PC-3 (cell line): ENCODE measurements at regions of chr11 and their contacts with region 1.

Region 1: DNA sequence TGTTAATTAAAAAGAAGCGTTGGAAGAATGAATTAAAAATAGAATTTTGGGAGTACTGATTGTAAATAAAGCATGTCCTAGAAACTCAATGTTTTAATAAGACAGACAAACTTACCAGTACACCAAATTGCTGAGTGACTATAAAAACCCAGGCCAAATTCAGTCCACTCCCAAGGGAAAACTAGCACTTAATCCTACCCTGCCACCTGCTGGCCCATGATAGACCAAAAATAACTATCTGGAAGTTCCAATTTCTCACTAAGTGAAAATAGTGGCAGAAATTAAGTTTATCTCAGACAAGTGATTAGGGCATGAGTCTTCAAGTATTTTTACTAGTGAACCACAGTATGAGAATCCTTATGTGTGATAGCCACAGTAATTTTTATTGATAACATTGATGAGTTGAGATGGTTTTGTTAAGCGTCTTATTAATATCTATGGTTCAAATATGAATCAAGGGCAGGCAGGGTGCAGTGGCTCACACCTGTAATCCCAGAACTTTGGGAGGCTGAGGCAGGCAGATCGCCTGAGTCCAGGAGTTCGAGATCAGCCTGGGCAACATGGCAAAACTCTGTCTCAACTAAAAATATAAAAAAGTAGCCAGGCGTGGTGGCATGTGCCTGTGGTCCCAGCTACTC is 9.8 kb upstream of the DDX10 start:
- DNase-seq: peak; percentile 86
- ATAC-seq: peak; percentile 90
- H3K4me3 ChIP-seq: no peak overlapping the region
- H3K27ac ChIP-seq: no peak overlapping the region
- H3K4me1 ChIP-seq: no peaks in the 10 kb centered on the region
- H3K27me3 ChIP-seq: no peaks in the 10 kb centered on the region
- CTCF ChIP-seq: peak; percentile 97

Region 2: GRCh38 chr11:108121274-108122155 is 533.6 kb before region 1 on chr11 and contains the start of gene ACAT1:
- CTCF ChIA-PET with region 1: no interaction called
- POLR2A ChIA-PET with region 1: no interaction called
- intact Hi-C with region 1: loop called (anchors 1 kb)
- DNase-seq: peak; percentile 98
- ATAC-seq: peak; percentile 96
- H3K4me3 ChIP-seq: peak within 1 kb of the TSS; percentile 74
- H3K27ac ChIP-seq: peak within 1 kb of the TSS; percentile 21
- H3K4me1 ChIP-seq: peaks cover 24% of the 10 kb centered on the region
- H3K27me3 ChIP-seq: no peaks in the 10 kb centered on the region
- CTCF ChIP-seq: no peak
- total RNA-seq, gene ACAT1: 180 and 212 TPM in 2 replicates

Region 3: DNA sequence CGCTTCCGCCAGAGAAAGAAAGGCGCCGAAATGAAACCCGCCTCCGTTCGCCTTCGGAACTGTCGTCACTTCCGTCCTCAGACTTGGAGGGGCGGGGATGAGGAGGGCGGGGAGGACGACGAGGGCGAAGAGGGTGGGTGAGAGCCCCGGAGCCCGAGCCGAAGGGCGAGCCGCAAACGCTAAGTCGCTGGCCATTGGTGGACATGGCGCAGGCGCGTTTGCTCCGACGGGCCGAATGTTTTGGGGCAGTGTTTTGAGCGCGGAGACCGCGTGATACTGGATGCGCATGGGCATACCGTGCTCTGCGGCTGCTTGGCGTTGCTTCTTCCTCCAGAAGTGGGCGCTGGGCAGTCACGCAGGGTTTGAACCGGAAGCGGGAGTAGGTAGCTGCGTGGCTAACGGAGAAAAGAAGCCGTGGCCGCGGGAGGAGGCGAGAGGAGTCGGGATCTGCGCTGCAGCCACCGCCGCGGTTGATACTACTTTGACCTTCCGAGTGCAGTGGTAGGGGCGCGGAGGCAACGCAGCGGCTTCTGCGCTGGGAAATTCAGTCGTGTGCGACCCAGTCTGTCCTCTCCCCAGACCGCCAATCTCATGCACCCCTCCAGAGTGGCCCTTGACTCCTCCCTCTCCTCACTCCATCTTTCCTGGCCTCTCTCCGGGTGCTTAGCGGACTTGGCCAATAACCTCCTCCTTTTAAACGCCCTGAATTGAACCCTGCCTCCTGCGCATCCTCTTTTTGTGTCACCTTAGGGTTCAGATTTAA is 432.2 kb before region 1 on chr11 and contains the start of gene ATM:
- CTCF ChIA-PET with region 1: no interaction called
- POLR2A ChIA-PET with region 1: no interaction called
- intact Hi-C with region 1: loop called (anchors 1 kb)
- DNase-seq: peak; percentile 100
- ATAC-seq: peak; percentile 88
- H3K4me3 ChIP-seq: peak within 1 kb of the TSS; percentile 83
- H3K27ac ChIP-seq: peak within 1 kb of the TSS; percentile 77
- H3K4me1 ChIP-seq: peaks cover 47% of the 10 kb centered on the region
- H3K27me3 ChIP-seq: no peaks in the 10 kb centered on the region
- CTCF ChIP-seq: peak; percentile 86
- total RNA-seq, gene ATM: 40.2 and 55.3 TPM in 2 replicates

Region 4: DNA sequence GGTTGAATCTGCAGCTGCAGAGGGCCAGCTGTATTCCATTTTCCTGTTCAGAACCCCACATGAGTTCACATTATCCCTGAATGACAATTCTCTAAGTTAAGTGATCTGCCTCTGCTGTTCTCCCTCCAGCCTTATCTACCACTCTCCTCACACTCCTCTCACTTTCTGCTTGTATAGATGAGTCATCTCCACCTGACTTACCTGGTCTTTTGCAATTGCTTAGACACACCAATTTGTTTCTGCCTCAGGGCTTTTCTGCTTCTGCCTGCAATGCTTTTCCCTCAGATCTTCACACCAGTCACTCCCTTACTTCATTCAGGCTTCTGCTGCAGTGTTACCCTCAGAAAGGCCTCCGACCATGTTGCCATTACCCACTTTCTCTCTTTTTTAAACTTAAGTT is 314.1 kb before region 1 on chr11:
- CTCF ChIA-PET with region 1: no interaction called
- POLR2A ChIA-PET with region 1: no interaction called
- intact Hi-C with region 1: loop called (anchors 2 kb)
- DNase-seq: peak; percentile 95
- ATAC-seq: peak; percentile 95
- H3K4me3 ChIP-seq: no peak overlapping the region
- H3K27ac ChIP-seq: peak overlapping the region; percentile 34
- H3K4me1 ChIP-seq: peaks cover 39% of the 10 kb centered on the region
- H3K27me3 ChIP-seq: no peaks in the 10 kb centered on the region
- CTCF ChIP-seq: no peak